Activated naive CD4-positive, alpha-beta T cell treated with anti-CD3 and anti-CD28 coated beads for 36 hours (primary cell): ENCODE measurements at regions of chr12 and their contacts with region 1.

Region 1: GRCh38 chr12:9064201-9064814 is 51.4 kb downstream of the A2M start:
- DNase-seq: peak; percentile 78
- H3K4me3 Mint-ChIP-seq: peak overlapping the region; percentile 69
- H3K27ac Mint-ChIP-seq: no peak overlapping the region
- H3K4me1 Mint-ChIP-seq: peaks cover 7% of the 10 kb centered on the region
- H3K27me3 Mint-ChIP-seq: peaks cover 2% of the 10 kb centered on the region

Region 2: GRCh38 chr12:8876887-8877286 is 187.4 kb before region 1 on chr12:
- CTCF ChIA-PET with region 1: no interaction called
- intact Hi-C with region 1: no loop called
- DNase-seq: no peak
- H3K4me3 Mint-ChIP-seq: no peak overlapping the region
- H3K27ac Mint-ChIP-seq: no peak overlapping the region
- H3K4me1 Mint-ChIP-seq: peaks cover 8% of the 10 kb centered on the region
- H3K27me3 Mint-ChIP-seq: no peaks in the 10 kb centered on the region

Region 3: GRCh38 chr12:9387450-9387849 is 323.1 kb after region 1 on chr12:
- CTCF ChIA-PET with region 1: no interaction called
- intact Hi-C with region 1: loop called (anchors 5 kb)
- DNase-seq: no peak
- H3K4me3 Mint-ChIP-seq: no peak overlapping the region
- H3K27ac Mint-ChIP-seq: no peak overlapping the region
- H3K4me1 Mint-ChIP-seq: peaks cover 17% of the 10 kb centered on the region
- H3K27me3 Mint-ChIP-seq: no peaks in the 10 kb centered on the region